Calu3 (cell line): ENCODE measurements at regions of chr6 and their contacts with region 1.

Region 1: DNA sequence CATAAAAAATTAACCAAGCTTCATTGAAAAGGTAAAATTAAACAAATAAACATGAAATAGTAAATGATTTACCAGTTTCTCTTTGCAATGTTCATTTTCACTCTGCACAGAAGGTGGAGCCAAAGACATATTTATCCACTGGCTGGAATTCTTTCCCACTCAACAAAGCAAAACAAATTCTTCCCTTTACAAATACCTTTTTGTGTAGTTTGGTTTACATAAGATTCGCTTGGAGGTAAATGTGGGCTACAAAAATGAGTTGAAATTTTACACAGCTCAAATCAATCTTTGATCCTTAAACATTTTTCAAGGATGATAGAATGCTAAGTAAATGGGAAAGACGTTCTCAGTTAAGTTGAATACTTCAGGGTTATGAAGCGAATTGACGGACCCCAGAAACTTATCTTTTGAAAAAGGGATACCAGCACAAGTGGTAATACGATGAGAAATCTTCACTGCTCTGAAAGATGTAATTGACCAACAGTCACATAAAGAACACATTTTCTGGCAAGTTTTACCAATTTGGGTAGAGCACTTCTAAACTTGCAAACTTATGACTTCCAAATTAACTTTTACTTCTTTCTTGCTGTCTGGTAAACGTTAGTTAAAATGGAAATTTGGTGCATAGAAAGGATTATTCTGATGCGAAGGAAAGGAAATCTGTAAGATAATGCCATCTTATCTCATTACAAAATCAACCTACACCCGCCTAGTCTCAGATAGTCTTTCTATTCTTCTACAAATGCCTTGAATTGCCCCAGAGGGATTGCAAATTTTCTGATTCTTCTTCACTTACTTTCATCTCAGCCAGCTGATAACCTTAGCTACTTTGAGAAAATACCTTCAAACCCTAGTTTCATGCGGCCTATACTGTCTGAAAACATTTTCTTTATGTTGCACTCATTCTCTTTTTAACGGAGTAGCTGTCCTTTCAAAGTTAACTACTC is 4.7 kb upstream of the GJA1 start:
- DNase-seq: peak; percentile 23
- H3K4me3 Mint-ChIP-seq: no peak overlapping the region
- H3K27ac Mint-ChIP-seq: peak overlapping the region; percentile 7
- H3K4me1 Mint-ChIP-seq: peaks cover 27% of the 10 kb centered on the region
- H3K27me3 Mint-ChIP-seq: no peaks in the 10 kb centered on the region
- CTCF ChIP-seq: no peak

Region 2: DNA sequence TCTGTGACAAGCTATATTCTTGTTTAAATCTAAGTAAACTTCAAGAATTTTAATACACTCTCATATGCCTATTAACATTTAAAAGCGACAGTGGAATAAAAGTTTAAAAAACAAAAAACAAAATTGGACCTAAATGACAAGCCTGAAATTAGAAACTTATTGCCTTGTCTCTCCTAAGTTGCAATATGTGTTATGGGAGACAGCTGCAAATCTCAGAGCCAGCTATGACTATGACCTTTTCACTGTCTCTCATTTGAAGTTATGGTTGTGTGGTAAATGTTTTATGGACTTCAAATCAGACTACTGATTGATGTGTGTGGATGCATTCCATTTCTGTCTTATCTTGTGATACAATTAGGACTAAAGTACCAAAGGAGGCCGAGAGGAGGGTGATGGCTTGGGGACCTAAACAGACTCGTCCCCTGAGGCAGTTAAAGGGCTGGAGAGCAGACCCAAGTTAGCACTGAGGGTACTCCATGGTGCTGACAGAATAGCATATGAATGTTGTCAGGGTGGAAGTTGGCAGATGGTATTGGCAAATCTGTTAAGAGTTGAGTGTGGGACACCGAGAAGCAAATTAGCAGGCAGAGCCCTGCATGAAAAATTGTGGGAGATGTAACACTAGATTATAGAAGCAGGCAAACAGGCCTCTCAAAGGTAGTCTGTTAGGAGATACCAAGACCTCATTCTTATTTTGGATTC is 1151.2 kb before region 1 on chr6:
- CTCF ChIA-PET with region 1: no interaction called
- intact Hi-C with region 1: no loop called
- DNase-seq: no peak
- H3K4me3 Mint-ChIP-seq: no peak overlapping the region
- H3K27ac Mint-ChIP-seq: no peak overlapping the region
- H3K4me1 Mint-ChIP-seq: no peaks in the 10 kb centered on the region
- H3K27me3 Mint-ChIP-seq: no peaks in the 10 kb centered on the region
- CTCF ChIP-seq: no peak

Region 3: DNA sequence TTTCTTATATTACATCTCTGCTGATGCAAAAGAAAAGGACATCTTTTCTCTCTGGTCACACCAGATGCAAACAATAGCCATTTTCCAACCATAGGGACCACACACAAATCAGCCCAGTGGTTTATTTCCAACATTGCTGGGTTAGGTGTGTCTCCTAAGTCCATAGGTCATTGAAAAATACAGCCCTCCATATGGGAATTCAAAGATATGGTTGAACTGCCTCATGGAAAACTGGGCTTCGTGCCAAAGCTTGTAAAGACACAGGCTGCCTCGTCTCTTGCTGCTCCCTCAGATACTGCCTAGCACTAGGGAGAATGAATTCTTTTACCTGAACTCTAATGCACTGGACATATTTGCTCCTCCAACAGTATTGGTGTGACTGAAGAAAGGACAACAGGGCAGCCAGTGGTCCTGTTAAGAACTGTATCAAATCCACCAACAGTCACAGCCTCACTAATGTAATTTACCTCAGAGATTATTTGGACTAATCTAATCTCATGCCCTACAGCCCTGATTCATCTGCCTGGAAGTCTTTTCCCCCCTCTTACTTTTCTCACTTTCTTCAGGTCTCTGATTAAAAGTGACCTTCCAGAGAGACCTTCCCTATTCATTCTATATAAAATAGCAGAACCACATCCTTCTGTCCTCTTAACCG is 48.2 kb before region 1 on chr6:
- CTCF ChIA-PET with region 1: no interaction called
- intact Hi-C with region 1: no loop called
- DNase-seq: no peak
- H3K4me3 Mint-ChIP-seq: no peak overlapping the region
- H3K27ac Mint-ChIP-seq: no peak overlapping the region
- H3K4me1 Mint-ChIP-seq: no peaks in the 10 kb centered on the region
- H3K27me3 Mint-ChIP-seq: no peaks in the 10 kb centered on the region
- CTCF ChIP-seq: no peak

Region 4: GRCh38 chr6:121615493-121615892 is 184.7 kb after region 1 on chr6:
- CTCF ChIA-PET with region 1: no interaction called
- intact Hi-C with region 1: loop called (anchors 2 kb)
- DNase-seq: peak; percentile 18
- H3K4me3 Mint-ChIP-seq: no peak overlapping the region
- H3K27ac Mint-ChIP-seq: no peak overlapping the region
- H3K4me1 Mint-ChIP-seq: peaks cover 12% of the 10 kb centered on the region
- H3K27me3 Mint-ChIP-seq: no peaks in the 10 kb centered on the region
- CTCF ChIP-seq: peak; percentile 27

Region 5: DNA sequence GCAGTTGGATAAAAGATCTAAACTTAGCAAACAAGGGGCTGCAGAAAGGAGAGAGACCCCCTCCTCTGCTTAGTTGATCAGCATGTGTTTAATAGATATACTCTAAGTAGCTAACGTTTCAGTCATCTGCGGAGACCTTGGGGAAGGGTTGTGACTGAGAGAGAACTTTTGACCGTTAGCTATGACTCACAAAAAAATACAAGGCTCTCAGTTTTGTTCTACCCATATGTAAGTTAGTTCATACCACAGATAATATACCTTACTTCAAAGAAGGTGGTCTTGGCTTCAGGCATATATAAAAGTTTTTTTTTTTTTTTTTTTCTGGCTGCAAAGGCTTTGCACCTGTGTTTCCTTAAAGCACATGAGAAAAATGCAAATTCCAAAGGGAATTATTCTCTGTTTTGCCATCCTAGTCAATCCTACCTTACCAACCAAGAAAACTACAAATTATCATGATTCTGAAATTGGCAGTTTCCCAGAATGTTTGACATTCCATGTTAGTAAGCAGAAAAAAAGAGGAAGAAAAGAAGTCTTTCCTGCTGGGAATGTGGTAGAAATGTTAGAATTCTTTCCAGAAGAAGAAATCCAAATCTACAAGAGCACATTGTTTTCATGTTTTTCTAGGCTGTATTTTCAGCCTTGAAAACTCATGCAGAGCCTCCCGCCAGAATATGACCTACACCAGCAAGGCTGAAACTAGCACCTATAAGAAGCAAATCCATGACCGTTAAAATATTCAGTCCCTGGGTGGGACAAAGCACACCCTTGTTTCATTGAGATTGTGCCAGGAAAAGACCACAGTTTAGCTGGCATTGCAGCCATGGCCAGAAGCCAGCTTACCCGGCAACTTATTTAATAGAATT is 263.8 kb after region 1 on chr6:
- CTCF ChIA-PET with region 1: no interaction called
- intact Hi-C with region 1: loop called (anchors 10 kb)
- DNase-seq: no peak
- H3K4me3 Mint-ChIP-seq: no peak overlapping the region
- H3K27ac Mint-ChIP-seq: no peak overlapping the region
- H3K4me1 Mint-ChIP-seq: peaks cover 20% of the 10 kb centered on the region
- H3K27me3 Mint-ChIP-seq: no peaks in the 10 kb centered on the region
- CTCF ChIP-seq: no peak

Region 6: GRCh38 chr6:122033539-122034181 is 602.9 kb after region 1 on chr6:
- CTCF ChIA-PET with region 1: no interaction called
- intact Hi-C with region 1: loop called (anchors 1 kb)
- DNase-seq: peak; percentile 9
- H3K4me3 Mint-ChIP-seq: no peak overlapping the region
- H3K27ac Mint-ChIP-seq: no peak overlapping the region
- H3K4me1 Mint-ChIP-seq: peaks cover 12% of the 10 kb centered on the region
- H3K27me3 Mint-ChIP-seq: no peaks in the 10 kb centered on the region
- CTCF ChIP-seq: no peak

Region 7: GRCh38 chr6:122184401-122184827 is 753.6 kb after region 1 on chr6:
- CTCF ChIA-PET with region 1: interaction called, 3 read pairs
- intact Hi-C with region 1: loop called (anchors 1 kb)
- DNase-seq: no peak
- H3K4me3 Mint-ChIP-seq: no peak overlapping the region
- H3K27ac Mint-ChIP-seq: no peak overlapping the region
- H3K4me1 Mint-ChIP-seq: no peaks in the 10 kb centered on the region
- H3K27me3 Mint-ChIP-seq: no peaks in the 10 kb centered on the region
- CTCF ChIP-seq: no peak

Region 8: DNA sequence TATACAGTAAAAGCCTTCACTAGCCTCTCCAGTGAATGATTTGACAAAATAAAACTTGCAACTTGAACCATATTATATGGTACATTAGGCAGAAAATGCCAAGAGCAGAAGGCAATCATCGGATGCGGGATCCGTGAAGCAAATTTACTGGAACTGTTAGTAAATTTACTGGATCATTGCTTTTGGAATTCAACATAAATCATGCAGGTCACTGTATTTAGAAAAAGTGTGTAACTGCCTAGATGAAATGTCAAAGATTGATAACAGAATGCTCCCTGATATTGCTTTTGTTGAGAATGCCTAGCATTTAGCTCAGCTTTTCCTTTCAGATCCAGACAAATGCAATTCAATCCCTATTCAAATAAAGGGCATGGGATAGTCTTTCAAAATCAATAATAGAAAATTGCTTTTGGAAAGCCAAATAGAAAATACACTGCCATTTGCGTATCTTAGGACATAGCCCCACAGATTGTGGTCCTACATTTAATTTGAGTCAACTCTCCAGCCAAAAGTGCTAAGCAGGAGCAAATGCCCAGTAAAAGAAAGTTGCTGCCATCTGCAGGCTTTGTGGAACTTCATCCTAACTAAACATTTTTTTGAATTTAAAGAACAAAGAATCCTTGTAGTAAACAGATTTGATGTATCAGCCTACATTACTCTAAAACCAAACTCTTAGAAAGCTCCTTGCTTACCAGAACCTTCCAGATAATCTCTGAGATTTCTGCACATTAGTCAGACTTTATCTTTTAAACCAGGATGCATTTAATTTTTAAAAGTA is 859.2 kb after region 1 on chr6:
- CTCF ChIA-PET with region 1: no interaction called
- intact Hi-C with region 1: loop called (anchors 2 kb)
- DNase-seq: peak; percentile 11
- H3K4me3 Mint-ChIP-seq: no peak overlapping the region
- H3K27ac Mint-ChIP-seq: no peak overlapping the region
- H3K4me1 Mint-ChIP-seq: no peaks in the 10 kb centered on the region
- H3K27me3 Mint-ChIP-seq: no peaks in the 10 kb centered on the region
- CTCF ChIP-seq: no peak

Region 9: GRCh38 chr6:122372647-122373046 is 941.9 kb after region 1 on chr6:
- CTCF ChIA-PET with region 1: no interaction called
- intact Hi-C with region 1: loop called (anchors 1 kb)
- DNase-seq: no peak
- H3K4me3 Mint-ChIP-seq: no peak overlapping the region
- H3K27ac Mint-ChIP-seq: no peak overlapping the region
- H3K4me1 Mint-ChIP-seq: peaks cover 12% of the 10 kb centered on the region
- H3K27me3 Mint-ChIP-seq: no peaks in the 10 kb centered on the region
- CTCF ChIP-seq: no peak